Activated CD8-positive, alpha-beta T cell treated with anti-CD3 and anti-CD28 coated beads for 36 hours (primary cell): ENCODE measurements at regions of chr11 and their contacts with region 1.

Region 1: GRCh38 chr11:122668562-122669090 is 13.1 kb downstream of the UBASH3B start:
- DNase-seq: peak; percentile 33
- ATAC-seq: peak; percentile 79
- H3K4me3 Mint-ChIP-seq: peak overlapping the region; percentile 33
- H3K27ac Mint-ChIP-seq: peak overlapping the region; percentile 89
- H3K4me1 Mint-ChIP-seq: peaks cover 65% of the 10 kb centered on the region
- H3K27me3 Mint-ChIP-seq: no peaks in the 10 kb centered on the region
- CTCF ChIP-seq: no peak

Region 2: GRCh38 chr11:122642472-122642922 is 26.1 kb before region 1 on chr11:
- CTCF ChIA-PET with region 1: no interaction called
- POLR2A ChIA-PET with region 1: no interaction called
- intact Hi-C with region 1: no loop called
- DNase-seq: no peak
- ATAC-seq: no peak
- H3K4me3 Mint-ChIP-seq: no peak overlapping the region
- H3K27ac Mint-ChIP-seq: no peak overlapping the region
- H3K4me1 Mint-ChIP-seq: peaks cover 4% of the 10 kb centered on the region
- H3K27me3 Mint-ChIP-seq: no peaks in the 10 kb centered on the region
- CTCF ChIP-seq: no peak

Region 3: DNA sequence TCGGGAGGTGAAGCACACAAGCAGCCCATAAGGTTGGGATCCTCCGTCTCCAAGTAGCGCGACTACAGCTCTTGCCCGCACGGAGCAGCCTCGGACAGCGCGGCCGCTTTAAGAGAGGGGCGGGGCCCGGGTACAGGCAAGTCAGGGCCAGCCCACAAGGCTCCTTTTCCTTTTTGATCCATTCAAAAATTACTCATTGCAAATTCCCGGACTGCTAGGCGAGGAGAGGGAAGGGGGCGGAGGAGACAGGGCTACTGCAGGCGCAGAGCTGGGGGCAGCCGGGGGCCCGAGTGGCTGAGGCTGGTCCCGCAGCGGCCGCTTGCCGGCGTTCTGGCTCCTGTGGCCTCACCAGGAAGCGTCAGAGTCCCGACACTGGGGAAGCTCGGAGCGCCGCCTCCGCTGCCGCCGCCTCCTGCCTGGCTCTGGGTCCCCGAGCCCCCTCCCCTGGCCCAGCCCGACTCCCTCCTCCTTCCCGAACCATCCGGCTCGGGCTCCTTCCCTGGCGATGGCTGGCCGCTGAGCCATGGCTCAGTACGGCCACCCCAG is 13.0 kb before region 1 on chr11 and contains the start of gene UBASH3B:
- CTCF ChIA-PET with region 1: interaction called, 33 read pairs
- POLR2A ChIA-PET with region 1: interaction called, 32 read pairs
- intact Hi-C with region 1: no loop called
- DNase-seq: peak; percentile 76
- ATAC-seq: peak; percentile 75
- H3K4me3 Mint-ChIP-seq: peak within 1 kb of the TSS; percentile 97
- H3K27ac Mint-ChIP-seq: peak within 1 kb of the TSS; percentile 91
- H3K4me1 Mint-ChIP-seq: peaks cover 31% of the 10 kb centered on the region
- H3K27me3 Mint-ChIP-seq: no peaks in the 10 kb centered on the region
- CTCF ChIP-seq: peak; percentile 11
- total RNA-seq, gene UBASH3B: 36.1 to 40.6 TPM

Region 4: GRCh38 chr11:122717264-122717867 is 48.7 kb after region 1 on chr11:
- CTCF ChIA-PET with region 1: interaction called, 3 read pairs
- POLR2A ChIA-PET with region 1: interaction called, 3 read pairs
- intact Hi-C with region 1: loop called (anchors 1 kb)
- DNase-seq: peak; percentile 93
- ATAC-seq: peak; percentile 83
- H3K4me3 Mint-ChIP-seq: peak overlapping the region; percentile 45
- H3K27ac Mint-ChIP-seq: peak overlapping the region; percentile 90
- H3K4me1 Mint-ChIP-seq: peaks cover 87% of the 10 kb centered on the region
- H3K27me3 Mint-ChIP-seq: no peaks in the 10 kb centered on the region
- CTCF ChIP-seq: no peak

Region 5: GRCh38 chr11:122749005-122749687 is 80.5 kb after region 1 on chr11:
- CTCF ChIA-PET with region 1: interaction called, 71 read pairs
- POLR2A ChIA-PET with region 1: interaction called, 20 read pairs
- intact Hi-C with region 1: loop called (anchors 5 kb)
- DNase-seq: peak; percentile 83
- ATAC-seq: peak; percentile 73
- H3K4me3 Mint-ChIP-seq: no peak overlapping the region
- H3K27ac Mint-ChIP-seq: no peak overlapping the region
- H3K4me1 Mint-ChIP-seq: peaks cover 30% of the 10 kb centered on the region
- H3K27me3 Mint-ChIP-seq: no peaks in the 10 kb centered on the region
- CTCF ChIP-seq: no peak

Region 6: DNA sequence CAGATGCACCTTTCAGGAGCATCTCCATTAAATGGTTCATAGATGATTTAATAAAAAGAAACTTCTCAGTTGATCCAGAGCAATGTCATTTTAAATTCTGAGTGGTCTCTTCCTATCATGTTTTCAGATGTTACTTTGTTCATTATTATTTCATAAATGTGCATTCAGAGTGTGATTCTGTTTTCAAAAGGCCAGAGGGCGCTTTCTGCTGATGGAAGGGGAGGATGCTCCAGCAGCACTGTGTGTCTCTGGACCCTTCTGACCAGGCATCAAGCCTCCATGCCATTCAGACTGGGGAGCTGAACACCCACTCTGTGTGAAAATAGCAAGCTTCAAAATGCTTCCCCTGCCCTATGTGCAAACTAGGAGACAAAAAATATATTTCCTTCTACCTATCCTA is 145.8 kb after region 1 on chr11:
- CTCF ChIA-PET with region 1: no interaction called
- POLR2A ChIA-PET with region 1: no interaction called
- intact Hi-C with region 1: no loop called
- DNase-seq: peak; percentile 27
- ATAC-seq: peak; percentile 58
- H3K4me3 Mint-ChIP-seq: no peak overlapping the region
- H3K27ac Mint-ChIP-seq: no peak overlapping the region
- H3K4me1 Mint-ChIP-seq: peaks cover 42% of the 10 kb centered on the region
- H3K27me3 Mint-ChIP-seq: no peaks in the 10 kb centered on the region
- CTCF ChIP-seq: peak; percentile 39

Region 7: GRCh38 chr11:122863704-122864326 is 195.2 kb after region 1 on chr11:
- CTCF ChIA-PET with region 1: no interaction called
- POLR2A ChIA-PET with region 1: no interaction called
- intact Hi-C with region 1: no loop called
- DNase-seq: peak; percentile 66
- ATAC-seq: no peak
- H3K4me3 Mint-ChIP-seq: no peak overlapping the region
- H3K27ac Mint-ChIP-seq: no peak overlapping the region
- H3K4me1 Mint-ChIP-seq: peaks cover 17% of the 10 kb centered on the region
- H3K27me3 Mint-ChIP-seq: no peaks in the 10 kb centered on the region
- CTCF ChIP-seq: peak; percentile 89